ENCODE measurements at regions of chr5 and their contacts with region 1.

Region 1: GRCh38 chr5:123423278-123424149 is at the start of gene CEP120:
- DNase-seq: peak; percentile 96
- H3K4me3 Mint-ChIP-seq: no peak within 1 kb of the TSS
- H3K27ac Mint-ChIP-seq: peak within 1 kb of the TSS; percentile 69
- H3K4me1 Mint-ChIP-seq: peaks cover 20% of the 10 kb centered on the region
- H3K27me3 Mint-ChIP-seq: no peaks in the 10 kb centered on the region
- total RNA-seq, gene CEP120: 29.8 and 32.5 TPM in 2 replicates

Region 2: GRCh38 chr5:122774861-122775549 is 648.5 kb before region 1 on chr5 and contains the start of gene SNX2:
- intact Hi-C with region 1: loop called (anchors 10 kb)
- DNase-seq: peak; percentile 79
- H3K4me3 Mint-ChIP-seq: peak within 1 kb of the TSS; percentile 95
- H3K27ac Mint-ChIP-seq: peak within 1 kb of the TSS; percentile 82
- H3K4me1 Mint-ChIP-seq: peaks cover 32% of the 10 kb centered on the region
- H3K27me3 Mint-ChIP-seq: peaks cover 4% of the 10 kb centered on the region
- total RNA-seq, gene SNX2: 30.5 and 35.0 TPM in 2 replicates

Region 3: DNA sequence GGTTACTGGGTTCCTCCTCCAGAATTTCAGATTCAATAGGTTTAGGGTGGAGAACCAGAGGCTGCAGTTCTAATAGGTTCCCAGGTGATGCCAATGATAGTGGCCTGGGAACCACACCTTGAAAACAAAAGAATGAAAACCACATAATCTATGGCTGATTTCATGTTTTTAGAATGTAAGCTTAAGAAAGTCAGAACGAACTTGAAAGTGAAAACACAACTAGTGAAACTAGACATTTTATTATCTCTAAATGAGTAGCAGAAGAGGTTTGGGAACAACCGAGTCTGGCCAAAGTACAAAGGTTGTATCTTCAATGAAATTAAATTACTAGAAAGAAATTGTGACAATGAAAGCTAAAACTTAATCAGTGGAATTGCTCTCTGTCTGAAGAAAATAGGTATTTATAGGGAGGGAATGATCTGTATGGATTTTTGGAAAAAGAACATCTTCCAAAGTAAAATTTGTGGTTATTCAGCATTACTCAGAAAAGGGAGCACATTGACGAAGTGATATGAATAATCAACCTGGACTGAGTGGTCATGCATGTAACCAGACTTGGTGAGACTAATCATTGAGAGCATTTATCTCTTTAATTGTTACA is 24.6 kb after region 1 on chr5:
- intact Hi-C with region 1: loop called (anchors 1 kb)
- DNase-seq: peak; percentile 37
- H3K4me3 Mint-ChIP-seq: peak overlapping the region; percentile 9
- H3K27ac Mint-ChIP-seq: peak overlapping the region; percentile 86
- H3K4me1 Mint-ChIP-seq: peaks cover 36% of the 10 kb centered on the region
- H3K27me3 Mint-ChIP-seq: peaks cover 9% of the 10 kb centered on the region

Region 4: GRCh38 chr5:123511648-123512605 is 88.4 kb after region 1 on chr5 and contains the start of gene CSNK1G3:
- intact Hi-C with region 1: loop called (anchors 1 kb)
- DNase-seq: peak; percentile 89
- H3K4me3 Mint-ChIP-seq: peak within 1 kb of the TSS; percentile 97
- H3K27ac Mint-ChIP-seq: peak within 1 kb of the TSS; percentile 99
- H3K4me1 Mint-ChIP-seq: peaks cover 53% of the 10 kb centered on the region
- H3K27me3 Mint-ChIP-seq: peaks cover 5% of the 10 kb centered on the region
- total RNA-seq, gene CSNK1G3: 39.6 and 45.8 TPM in 2 replicates

Region 5: GRCh38 chr5:123594434-123594833 is 170.9 kb after region 1 on chr5:
- intact Hi-C with region 1: loop called (anchors 5 kb)
- DNase-seq: no peak
- H3K4me3 Mint-ChIP-seq: no peak overlapping the region
- H3K27ac Mint-ChIP-seq: no peak overlapping the region
- H3K4me1 Mint-ChIP-seq: no peaks in the 10 kb centered on the region
- H3K27me3 Mint-ChIP-seq: no peaks in the 10 kb centered on the region